ENCODE measurements at regions of chr1 and their contacts with region 1.

Region 1: DNA sequence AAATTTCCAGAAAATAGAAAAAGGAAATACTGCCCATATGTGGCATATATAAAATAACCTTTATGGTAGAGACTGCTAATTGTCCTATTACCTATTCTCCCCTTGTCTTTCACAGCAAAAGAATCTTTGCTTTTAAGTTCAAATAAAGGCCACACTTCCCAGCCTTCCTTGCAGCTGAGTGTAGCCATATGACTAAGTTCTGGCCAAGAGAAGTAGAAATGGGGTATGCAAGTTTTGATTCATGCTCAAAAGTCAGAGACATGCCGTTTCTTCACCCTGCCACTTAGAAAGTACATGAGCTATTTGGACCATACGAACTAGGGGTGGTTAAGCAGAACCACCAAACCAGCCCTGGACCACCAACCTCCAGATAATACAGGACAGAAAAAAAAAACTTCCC is 18.3 kb upstream of the S100A2 start:
- DNase-seq: no peak
- H3K4me3 ChIP-seq: no peak overlapping the region
- H3K27ac ChIP-seq: no peak overlapping the region
- H3K4me1 ChIP-seq: peaks cover 15% of the 10 kb centered on the region
- H3K27me3 ChIP-seq: no peaks in the 10 kb centered on the region
- CTCF ChIP-seq: no peak
- EP300 ChIP-seq: no peak
- POLR2A ChIP-seq: no peak

Region 2: DNA sequence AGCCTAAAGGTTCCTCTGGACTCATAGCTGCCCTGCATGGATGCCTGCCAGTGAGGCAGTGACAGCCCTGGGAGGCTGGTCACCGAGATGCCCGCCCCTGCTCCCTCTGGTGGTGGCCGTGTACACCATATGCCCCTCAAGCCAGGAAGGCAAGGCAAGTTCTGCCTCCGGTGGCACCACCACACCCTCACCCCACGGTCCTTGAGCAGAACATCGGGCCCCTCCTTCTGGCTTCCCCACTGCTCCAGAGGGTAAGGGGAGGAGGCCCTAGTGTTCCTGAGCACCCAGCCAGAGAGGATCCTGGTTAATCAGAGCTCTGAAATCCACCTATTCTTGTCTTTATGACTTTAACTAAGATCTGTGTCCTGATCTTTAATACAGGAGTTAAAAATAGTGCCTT is 33.7 kb after region 1 on chr1:
- intact Hi-C with region 1: loop called in 2 of 4 experiments (anchors 5 to 10 kb)
- DNase-seq: peak in 4 of 5 donors; percentile 49 to 79 (median 70)
- H3K4me3 ChIP-seq: no peak overlapping the region
- H3K27ac ChIP-seq: no peak overlapping the region
- H3K4me1 ChIP-seq: peaks cover 11% of the 10 kb centered on the region
- H3K27me3 ChIP-seq: no peaks in the 10 kb centered on the region
- CTCF ChIP-seq: peak in 1 of 3 donors; percentile 60
- EP300 ChIP-seq: no peak
- POLR2A ChIP-seq: no peak

Region 3: DNA sequence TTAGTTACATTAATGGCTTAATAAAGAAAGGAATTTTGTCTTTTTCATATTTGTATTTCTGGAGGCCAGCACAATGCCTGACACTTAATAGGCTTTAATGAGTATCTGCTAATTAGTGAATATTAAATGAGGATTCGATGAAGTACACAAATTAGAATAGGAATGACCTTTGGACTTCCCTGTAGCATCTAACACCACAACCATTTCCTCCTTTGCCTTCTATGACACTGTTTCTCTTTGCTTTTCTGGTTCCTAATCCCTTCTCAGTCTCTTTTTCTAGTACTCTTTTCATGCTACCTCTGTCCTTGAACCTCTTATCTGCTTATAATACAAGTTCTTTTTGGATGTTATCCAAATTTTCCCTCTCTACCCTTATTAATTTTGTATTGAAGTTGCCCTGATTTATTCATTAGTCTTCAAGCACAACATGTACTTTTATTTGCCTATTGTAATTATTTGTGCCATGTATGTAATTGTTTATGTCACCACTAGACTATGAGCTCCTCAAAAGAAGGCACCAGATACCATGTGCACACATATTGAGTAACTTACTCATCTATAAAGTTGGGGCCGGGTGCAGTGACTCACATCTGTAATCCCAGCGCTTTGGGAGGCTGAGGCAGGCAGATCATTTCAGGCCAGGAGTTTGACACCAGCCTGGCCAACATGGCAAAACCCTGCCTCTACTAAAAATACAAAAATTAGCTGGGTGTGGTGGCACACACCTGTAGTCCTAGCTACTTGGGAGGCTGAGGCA is 430.4 kb after region 1 on chr1:
- intact Hi-C with region 1: no loop called
- DNase-seq: no peak
- H3K4me3 ChIP-seq: no peak overlapping the region
- H3K27ac ChIP-seq: no peak overlapping the region
- H3K4me1 ChIP-seq: no peaks in the 10 kb centered on the region
- H3K27me3 ChIP-seq: no peaks in the 10 kb centered on the region
- CTCF ChIP-seq: no peak
- EP300 ChIP-seq: no peak
- POLR2A ChIP-seq: no peak